MCF 10A (cell line): ENCODE measurements at regions of chr21 and their contacts with region 1.

Region 1: GRCh38 chr21:30340441-30341241 is 3.1 kb upstream of the KRTAP27-1 start:
- DNase-seq: peak; percentile 56
- H3K4me3 Mint-ChIP-seq: no peak overlapping the region
- H3K27ac Mint-ChIP-seq: no peak overlapping the region
- H3K4me1 Mint-ChIP-seq: peaks cover 25% of the 10 kb centered on the region
- H3K27me3 Mint-ChIP-seq: no peaks in the 10 kb centered on the region
- CTCF ChIP-seq: peak; percentile 86

Region 2: GRCh38 chr21:30206551-30207251 is 133.9 kb before region 1 on chr21:
- CTCF ChIA-PET with region 1: no interaction called
- POLR2A ChIA-PET with region 1: no interaction called
- intact Hi-C with region 1: no loop called
- DNase-seq: peak; percentile 14
- H3K4me3 Mint-ChIP-seq: no peak overlapping the region
- H3K27ac Mint-ChIP-seq: peak overlapping the region; percentile 25
- H3K4me1 Mint-ChIP-seq: peaks cover 7% of the 10 kb centered on the region
- H3K27me3 Mint-ChIP-seq: no peaks in the 10 kb centered on the region
- CTCF ChIP-seq: no peak

Region 3: GRCh38 chr21:30289215-30289614 is 51.4 kb before region 1 on chr21 and contains the start of gene KRTAP25-1:
- CTCF ChIA-PET with region 1: no interaction called
- POLR2A ChIA-PET with region 1: no interaction called
- intact Hi-C with region 1: no loop called
- DNase-seq: no peak
- H3K4me3 Mint-ChIP-seq: no peak within 1 kb of the TSS
- H3K27ac Mint-ChIP-seq: no peak within 1 kb of the TSS
- H3K4me1 Mint-ChIP-seq: no peaks in the 10 kb centered on the region
- H3K27me3 Mint-ChIP-seq: peaks cover 84% of the 10 kb centered on the region
- CTCF ChIP-seq: no peak
- total RNA-seq, gene KRTAP25-1: not detected in 2 replicates

Region 4: GRCh38 chr21:30329203-30329875 is 11.3 kb before region 1 on chr21:
- CTCF ChIA-PET with region 1: interaction called, 16 read pairs
- POLR2A ChIA-PET with region 1: no interaction called
- intact Hi-C with region 1: no loop called
- DNase-seq: peak; percentile 47
- H3K4me3 Mint-ChIP-seq: peak overlapping the region; percentile 48
- H3K27ac Mint-ChIP-seq: no peak overlapping the region
- H3K4me1 Mint-ChIP-seq: peaks cover 8% of the 10 kb centered on the region
- H3K27me3 Mint-ChIP-seq: peaks cover 7% of the 10 kb centered on the region
- CTCF ChIP-seq: no peak

Region 5: GRCh38 chr21:30408782-30409494 is 68.3 kb after region 1 on chr21:
- CTCF ChIA-PET with region 1: interaction called, 4 read pairs
- POLR2A ChIA-PET with region 1: no interaction called
- intact Hi-C with region 1: loop called (anchors 1 kb)
- DNase-seq: peak; percentile 91
- H3K4me3 Mint-ChIP-seq: peak overlapping the region; percentile 16
- H3K27ac Mint-ChIP-seq: no peak overlapping the region
- H3K4me1 Mint-ChIP-seq: peaks cover 7% of the 10 kb centered on the region
- H3K27me3 Mint-ChIP-seq: peaks cover 94% of the 10 kb centered on the region
- CTCF ChIP-seq: peak; percentile 30

Region 6: GRCh38 chr21:30434033-30434631 is 93.5 kb after region 1 on chr21:
- CTCF ChIA-PET with region 1: interaction called, 5 read pairs
- POLR2A ChIA-PET with region 1: no interaction called
- intact Hi-C with region 1: loop called (anchors 10 kb)
- DNase-seq: peak; percentile 67
- H3K4me3 Mint-ChIP-seq: no peak overlapping the region
- H3K27ac Mint-ChIP-seq: no peak overlapping the region
- H3K4me1 Mint-ChIP-seq: peaks cover 6% of the 10 kb centered on the region
- H3K27me3 Mint-ChIP-seq: peaks cover 89% of the 10 kb centered on the region
- CTCF ChIP-seq: peak; percentile 44